Sciatic nerve (tissue), 2 donors: ENCODE measurements at regions of chr1 and their contacts with region 1.

Region 1: GRCh38 chr1:205325334-205325884 is 3.9 kb upstream of the NUAK2 start:
- DNase-seq: no peak
- ATAC-seq: peak; percentile 59

Region 2: DNA sequence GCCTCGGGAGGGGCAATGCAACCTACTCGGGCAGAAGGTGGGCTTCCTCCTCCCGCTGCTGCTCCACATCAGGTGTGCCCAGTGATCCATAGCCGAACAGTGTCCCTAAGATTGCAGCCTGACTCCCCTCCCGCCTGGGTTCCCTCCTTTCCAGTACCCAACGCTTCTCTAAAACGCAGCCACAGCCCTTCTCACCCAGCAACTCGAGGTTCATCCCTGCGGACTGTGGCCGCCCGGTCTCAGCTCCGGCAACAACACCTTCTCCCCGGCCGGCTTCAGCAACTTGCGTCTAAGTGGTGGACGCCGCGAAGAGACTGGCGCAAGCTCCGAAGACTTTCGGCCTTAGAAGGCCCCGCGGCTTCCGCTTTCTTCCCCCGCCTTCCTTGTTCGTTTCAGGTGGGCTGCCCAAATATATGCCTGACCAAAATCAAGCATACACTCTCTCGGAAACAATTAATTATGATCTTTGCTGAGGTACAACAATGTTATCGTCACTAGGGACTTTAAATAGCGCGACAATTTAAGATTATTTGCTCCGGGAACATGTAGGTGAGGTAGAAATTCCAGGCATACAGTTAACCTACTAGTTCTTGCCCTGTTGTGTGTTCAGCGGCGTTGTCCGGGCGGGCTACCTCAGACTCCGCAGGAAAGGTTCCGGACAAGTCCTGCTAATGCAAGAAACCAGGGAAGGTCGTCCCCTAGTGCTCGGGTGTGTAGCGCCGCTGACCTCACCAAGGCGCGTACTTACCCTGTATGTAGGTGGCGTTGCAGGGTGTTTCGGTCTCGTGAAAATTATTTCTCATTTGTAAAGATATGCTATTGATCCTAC is 203.5 kb before region 1 on chr1 and contains the start of gene RBBP5:
- intact Hi-C with region 1: loop called (anchors 5 kb)
- DNase-seq: peak; percentile 95
- ATAC-seq: peak; percentile 99
- total RNA-seq, gene RBBP5: 18.1 TPM

Region 3: DNA sequence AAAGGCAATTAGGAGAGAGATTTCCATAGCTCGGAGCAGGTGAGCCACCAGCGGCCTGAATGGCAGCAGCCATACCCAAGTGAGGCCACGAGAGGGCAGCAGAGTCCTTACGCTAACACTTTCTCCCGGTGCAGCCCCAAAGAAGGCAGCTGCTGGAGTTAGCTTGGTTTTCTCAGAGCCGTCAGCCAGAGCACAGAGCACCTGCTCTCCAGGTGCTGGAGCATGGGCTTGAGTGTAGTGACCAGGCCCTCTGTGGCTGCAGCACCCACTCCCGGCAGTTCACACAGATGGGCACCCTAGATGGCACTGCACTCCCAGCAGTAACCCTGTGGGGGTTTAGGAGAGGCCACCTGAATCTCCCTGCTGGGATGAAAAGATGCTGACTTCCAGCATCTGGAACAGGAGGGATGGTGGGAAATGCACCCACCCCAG is 51.8 kb before region 1 on chr1:
- intact Hi-C with region 1: loop called (anchors 2 kb)
- DNase-seq: peak; percentile 94
- ATAC-seq: peak; percentile 85